CD4-positive, alpha-beta memory T cell (primary cell): ENCODE measurements at regions of chr1 and their contacts with region 1.

Region 1: DNA sequence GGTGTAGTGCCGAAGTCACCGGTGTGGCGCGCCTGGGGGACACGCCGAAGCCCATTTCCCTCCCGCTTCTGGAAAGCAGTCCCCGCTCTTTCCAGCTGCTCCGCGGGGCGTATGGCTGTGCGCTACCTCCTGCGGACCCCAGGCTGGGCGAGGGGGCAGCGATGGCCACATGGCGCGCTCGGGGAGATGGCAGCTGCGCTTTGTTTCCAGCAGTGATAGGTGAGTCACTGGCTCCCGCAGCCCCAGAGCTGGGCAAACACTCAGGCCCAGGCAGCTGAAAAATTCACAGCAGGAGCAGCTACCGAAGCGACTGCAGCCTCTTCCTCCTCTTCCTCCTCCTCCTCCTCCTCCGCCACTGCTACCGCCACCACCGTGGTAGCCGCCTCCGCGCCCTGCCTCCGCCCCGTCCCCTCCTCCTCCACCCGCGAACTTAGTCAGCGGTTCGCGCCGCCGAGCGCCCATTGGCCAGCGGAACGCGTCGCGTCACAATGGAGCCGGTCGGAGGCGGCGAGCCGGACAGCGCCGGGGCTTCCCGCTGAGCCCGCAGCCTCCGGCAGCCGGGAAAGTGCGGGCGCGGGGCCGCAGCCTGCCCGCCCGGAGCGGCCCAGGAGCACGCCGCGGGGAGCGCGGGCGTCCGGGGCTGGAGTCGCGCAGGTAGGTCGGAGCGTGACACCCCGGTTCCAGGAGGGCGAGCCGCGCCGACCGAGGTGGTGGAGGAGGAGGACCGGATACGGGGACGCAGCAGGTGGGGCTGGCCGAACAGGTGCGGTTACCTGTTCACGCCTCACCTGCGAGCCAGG is at the start of gene LRRC8B:
- DNase-seq: peak; percentile 85 to 90 (median 88)
- H3K4me3 ChIP-seq: peak within 1 kb of the TSS; percentile 91 to 93
- H3K4me3 Mint-ChIP-seq: peak within 1 kb of the TSS in 5 of 8 donors; percentile 82 to 97 (median 87)
- H3K27ac ChIP-seq: peak within 1 kb of the TSS; percentile 92
- H3K27ac Mint-ChIP-seq: peak within 1 kb of the TSS in 6 of 7 donors; percentile 91 to 98 (median 96)
- H3K4me1 ChIP-seq: peaks cover 50% of the 10 kb centered on the region
- H3K4me1 Mint-ChIP-seq: peaks cover 11 to 21% (median 14%) of the 10 kb centered on the region in 4 donors
- H3K27me3 ChIP-seq: no peaks in the 10 kb centered on the region
- H3K27me3 Mint-ChIP-seq: no peaks in the 10 kb centered on the region
- total RNA-seq, gene LRRC8B: 15.6 to 18.1 TPM

Region 2: GRCh38 chr1:89499320-89499719 is 25.2 kb before region 1 on chr1:
- CTCF ChIA-PET with region 1: no interaction called
- POLR2A ChIA-PET with region 1: no interaction called
- intact Hi-C with region 1: no loop called
- DNase-seq: no peak
- H3K4me3 ChIP-seq: no peak overlapping the region
- H3K4me3 Mint-ChIP-seq: no peak overlapping the region
- H3K27ac ChIP-seq: no peak overlapping the region
- H3K27ac Mint-ChIP-seq: no peak overlapping the region
- H3K4me1 ChIP-seq: no peaks in the 10 kb centered on the region
- H3K4me1 Mint-ChIP-seq: no peaks in the 10 kb centered on the region
- H3K27me3 ChIP-seq: no peaks in the 10 kb centered on the region
- H3K27me3 Mint-ChIP-seq: peaks cover 0 to 3% of the 10 kb centered on the region in 2 donors

Region 3: GRCh38 chr1:89563957-89564604 is 39.5 kb after region 1 on chr1:
- CTCF ChIA-PET with region 1: interaction called, 3 read pairs
- POLR2A ChIA-PET with region 1: interaction called, 3 read pairs
- intact Hi-C with region 1: loop called (anchors 5 kb)
- DNase-seq: no peak
- H3K4me3 ChIP-seq: no peak overlapping the region
- H3K4me3 Mint-ChIP-seq: no peak overlapping the region
- H3K27ac ChIP-seq: no peak overlapping the region
- H3K27ac Mint-ChIP-seq: peak overlapping the region in 2 of 7 donors; percentile 17 to 41
- H3K4me1 ChIP-seq: peaks cover 9% of the 10 kb centered on the region
- H3K4me1 Mint-ChIP-seq: peaks cover 22 to 35% (median 28%) of the 10 kb centered on the region in 4 donors
- H3K27me3 ChIP-seq: no peaks in the 10 kb centered on the region
- H3K27me3 Mint-ChIP-seq: no peaks in the 10 kb centered on the region

Region 4: DNA sequence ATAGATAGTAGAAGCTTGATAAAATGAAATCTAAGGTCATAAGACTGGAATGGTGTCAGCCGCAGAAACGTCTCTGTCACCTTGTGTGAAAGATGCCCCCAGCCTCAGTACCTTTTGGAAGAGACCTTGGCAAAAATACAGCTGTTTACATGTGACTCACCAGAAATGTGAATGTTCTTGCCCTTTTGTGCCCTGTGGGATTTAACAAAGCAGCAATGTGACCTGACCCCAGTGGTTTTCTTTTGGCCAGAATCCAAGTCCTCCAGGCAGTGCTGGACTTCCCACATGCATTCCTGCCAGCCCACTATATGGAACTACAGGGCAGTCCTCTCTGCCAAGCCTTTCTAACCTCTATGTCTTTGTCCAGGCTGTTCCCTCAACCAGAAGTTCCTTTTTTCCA is 81.1 kb after region 1 on chr1:
- CTCF ChIA-PET with region 1: interaction called, 17 read pairs
- POLR2A ChIA-PET with region 1: interaction called, 73 read pairs
- intact Hi-C with region 1: loop called (anchors 1 kb)
- DNase-seq: no peak
- H3K4me3 ChIP-seq: peak overlapping the region in 1 of 2 donors; percentile 0
- H3K4me3 Mint-ChIP-seq: peak overlapping the region in 6 of 8 donors; percentile 29 to 97 (median 64)
- H3K27ac ChIP-seq: peak overlapping the region; percentile 84
- H3K27ac Mint-ChIP-seq: peak overlapping the region; percentile 98 to 100 (median 99)
- H3K4me1 ChIP-seq: peaks cover 95% of the 10 kb centered on the region
- H3K4me1 Mint-ChIP-seq: peaks cover 73 to 98% (median 87%) of the 10 kb centered on the region in 4 donors
- H3K27me3 ChIP-seq: no peaks in the 10 kb centered on the region
- H3K27me3 Mint-ChIP-seq: no peaks in the 10 kb centered on the region

Region 5: DNA sequence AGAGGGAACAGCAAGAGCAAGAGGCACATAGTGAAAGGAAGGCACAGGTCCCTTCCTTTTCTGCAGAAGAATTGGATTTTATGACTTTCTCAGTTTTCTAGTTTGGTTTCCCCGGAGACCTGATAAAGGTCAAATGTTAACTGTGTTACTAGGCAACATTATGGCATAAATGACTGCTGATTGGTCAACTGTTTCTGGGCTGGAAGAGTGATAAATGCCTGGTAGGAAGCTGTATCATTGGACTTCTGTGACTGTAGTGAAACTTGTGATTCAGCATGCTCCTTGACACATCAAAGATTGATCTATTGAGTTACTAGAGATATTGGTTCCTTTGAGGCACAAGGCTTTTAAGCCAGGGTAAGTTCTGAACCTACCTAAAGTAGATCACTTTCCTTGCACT is 164.0 kb after region 1 on chr1:
- CTCF ChIA-PET with region 1: no interaction called
- POLR2A ChIA-PET with region 1: no interaction called
- intact Hi-C with region 1: no loop called
- DNase-seq: no peak
- H3K4me3 ChIP-seq: no peak overlapping the region
- H3K4me3 Mint-ChIP-seq: no peak overlapping the region
- H3K27ac ChIP-seq: no peak overlapping the region
- H3K27ac Mint-ChIP-seq: peak overlapping the region; percentile 38 to 89 (median 71)
- H3K4me1 ChIP-seq: peaks cover 36% of the 10 kb centered on the region
- H3K4me1 Mint-ChIP-seq: peaks cover 60 to 85% (median 76%) of the 10 kb centered on the region in 4 donors
- H3K27me3 ChIP-seq: no peaks in the 10 kb centered on the region
- H3K27me3 Mint-ChIP-seq: no peaks in the 10 kb centered on the region

Region 6: GRCh38 chr1:89698624-89699023 is 174.1 kb after region 1 on chr1:
- CTCF ChIA-PET with region 1: no interaction called
- POLR2A ChIA-PET with region 1: interaction called, 3 read pairs
- intact Hi-C with region 1: loop called (anchors 5 kb)
- DNase-seq: peak in 2 of 5 donors; percentile 19 to 23
- H3K4me3 ChIP-seq: peak overlapping the region in 1 of 2 donors; percentile 0
- H3K4me3 Mint-ChIP-seq: peak overlapping the region; percentile 78 to 91 (median 86)
- H3K27ac ChIP-seq: peak overlapping the region; percentile 16
- H3K27ac Mint-ChIP-seq: peak overlapping the region; percentile 81 to 95 (median 92)
- H3K4me1 ChIP-seq: peaks cover 89% of the 10 kb centered on the region
- H3K4me1 Mint-ChIP-seq: peaks cover 68 to 91% (median 82%) of the 10 kb centered on the region in 4 donors
- H3K27me3 ChIP-seq: no peaks in the 10 kb centered on the region
- H3K27me3 Mint-ChIP-seq: no peaks in the 10 kb centered on the region